ENCODE measurements at regions of chr1 and their contacts with region 1.

Region 1: GRCh38 chr1:178310685-178311105 is 186.1 kb downstream of the CLEC20A start:
- DNase-seq: peak; percentile 61

Region 2: DNA sequence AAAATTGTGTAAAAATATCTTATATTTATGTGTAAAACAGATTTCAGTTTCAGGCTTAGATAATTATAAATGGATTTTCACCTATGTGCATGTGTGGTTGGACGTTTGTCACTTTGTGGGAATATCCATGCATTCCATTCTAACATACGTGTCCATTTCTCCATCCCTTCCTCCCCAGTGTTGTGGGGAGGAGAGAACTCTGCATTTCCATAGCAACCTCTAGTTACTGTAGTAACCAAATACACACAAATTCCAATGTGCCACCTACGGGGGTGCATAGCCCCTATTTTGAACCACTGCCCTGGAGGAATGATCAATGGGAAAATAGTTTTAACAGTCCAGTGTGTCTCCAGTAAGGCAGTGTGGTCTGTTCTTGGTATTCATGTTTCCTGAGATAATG is 137.7 kb before region 1 on chr1:
- CTCF ChIA-PET with region 1: no interaction called
- POLR2A ChIA-PET with region 1: no interaction called
- DNase-seq: no peak

Region 3: GRCh38 chr1:178501705-178502329 is 191.1 kb after region 1 on chr1:
- CTCF ChIA-PET with region 1: interaction called, 12 read pairs
- POLR2A ChIA-PET with region 1: no interaction called
- DNase-seq: peak; percentile 89